Panc1 (cell line): ENCODE measurements at regions of chr16 and their contacts with region 1.

Region 1: GRCh38 chr16:25626172-25626571 is 65.6 kb upstream of the HS3ST4 start:
- DNase-seq: no peak
- ATAC-seq: no peak
- H3K4me3 ChIP-seq: no peak overlapping the region
- H3K27ac ChIP-seq: no peak overlapping the region
- H3K4me1 ChIP-seq: no peaks in the 10 kb centered on the region
- H3K27me3 ChIP-seq: no peaks in the 10 kb centered on the region
- CTCF ChIP-seq: no peak

Region 2: GRCh38 chr16:23979982-23980381 is 1646.2 kb before region 1 on chr16:
- CTCF ChIA-PET with region 1: no interaction called
- POLR2A ChIA-PET with region 1: no interaction called
- in situ Hi-C with region 1: no loop called
- intact Hi-C with region 1: loop called (anchors 5 kb)
- DNase-seq: no peak
- ATAC-seq: no peak
- H3K4me3 ChIP-seq: no peak overlapping the region
- H3K27ac ChIP-seq: no peak overlapping the region
- H3K4me1 ChIP-seq: no peaks in the 10 kb centered on the region
- H3K27me3 ChIP-seq: peaks cover 21% of the 10 kb centered on the region
- CTCF ChIP-seq: no peak